ENCODE measurements at regions of chr1 and their contacts with region 1.

Region 1: DNA sequence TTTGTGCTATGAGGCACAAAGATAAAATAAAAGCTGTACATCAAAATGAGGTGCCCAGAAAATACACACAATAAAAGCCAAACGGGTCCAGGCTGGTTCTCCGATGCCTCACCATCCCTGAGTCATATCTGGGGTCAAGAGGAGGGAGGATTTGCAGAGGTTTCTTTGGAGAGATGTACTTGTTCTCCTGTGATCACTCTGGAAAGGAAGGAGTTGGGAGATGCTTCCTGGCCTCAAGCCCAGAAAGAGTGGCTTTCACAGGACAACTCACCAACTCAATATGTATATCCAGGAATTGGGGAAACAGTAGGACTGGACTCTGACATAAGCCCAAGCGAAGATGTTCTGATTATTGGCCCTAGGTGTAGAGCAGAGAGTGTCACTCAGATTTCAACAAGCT is 51.9 kb downstream of the DIPK1A start:
- DNase-seq: peak; percentile 97
- H3K4me3 ChIP-seq: peak overlapping the region in 1 of 3 experiments; percentile 23
- H3K27ac ChIP-seq: peak overlapping the region; percentile 81
- H3K4me1 ChIP-seq: peaks cover 34% of the 10 kb centered on the region
- H3K27me3 ChIP-seq: no peaks in the 10 kb centered on the region
- CTCF ChIP-seq: no peak

Region 2: DNA sequence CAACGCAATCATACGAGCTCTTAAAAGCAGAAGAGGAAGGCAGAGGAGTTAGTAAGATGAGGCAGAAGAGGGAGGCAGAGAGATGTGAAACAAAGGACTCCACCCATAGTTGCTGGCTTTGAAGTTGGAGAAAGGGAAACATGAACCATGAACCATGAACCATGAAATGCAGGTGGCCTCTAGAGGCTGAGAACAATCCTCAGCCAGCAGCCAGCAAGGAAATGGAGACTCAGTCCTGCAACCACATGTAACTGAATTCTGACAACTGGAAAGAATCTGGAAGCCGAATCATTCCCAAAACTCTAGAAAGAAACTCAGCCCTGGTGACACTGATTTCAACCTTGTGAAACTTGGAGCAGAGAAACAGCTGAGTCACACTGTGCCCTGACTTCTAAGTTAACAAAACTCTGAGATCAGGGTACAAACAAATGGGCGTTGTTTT is 41.8 kb after region 1 on chr1:
- CTCF ChIA-PET with region 1: interaction called, 7 read pairs
- dilution Hi-C with region 1: no loop called
- in situ Hi-C with region 1: no loop called
- intact Hi-C with region 1: loop called (anchors 2 kb)
- DNase-seq: peak; percentile 74
- H3K4me3 ChIP-seq: no peak overlapping the region
- H3K27ac ChIP-seq: peak overlapping the region; percentile 62
- H3K4me1 ChIP-seq: peaks cover 36% of the 10 kb centered on the region
- H3K27me3 ChIP-seq: no peaks in the 10 kb centered on the region
- CTCF ChIP-seq: no peak

Region 3: GRCh38 chr1:92960395-92961130 is 51.2 kb after region 1 on chr1:
- CTCF ChIA-PET with region 1: no interaction called
- dilution Hi-C with region 1: no loop called
- in situ Hi-C with region 1: no loop called
- intact Hi-C with region 1: loop called (anchors 1 kb)
- DNase-seq: peak; percentile 81
- H3K4me3 ChIP-seq: peak overlapping the region; percentile 62 to 70 (median 67)
- H3K27ac ChIP-seq: peak overlapping the region; percentile 80
- H3K4me1 ChIP-seq: peaks cover 15% of the 10 kb centered on the region
- H3K27me3 ChIP-seq: no peaks in the 10 kb centered on the region
- CTCF ChIP-seq: peak; percentile 60 to 85

Region 4: GRCh38 chr1:92994105-92994712 is 84.9 kb after region 1 on chr1:
- CTCF ChIA-PET with region 1: no interaction called
- dilution Hi-C with region 1: no loop called
- in situ Hi-C with region 1: no loop called
- intact Hi-C with region 1: loop called (anchors 1 kb)
- DNase-seq: peak; percentile 50
- H3K4me3 ChIP-seq: no peak overlapping the region
- H3K27ac ChIP-seq: no peak overlapping the region
- H3K4me1 ChIP-seq: peaks cover 6% of the 10 kb centered on the region
- H3K27me3 ChIP-seq: no peaks in the 10 kb centered on the region
- CTCF ChIP-seq: peak; percentile 70 to 80

Measured in mammary epithelial cell (primary cell).